HEK293 (cell line): ENCODE measurements at regions of chr6 and their contacts with region 1.

Region 1: GRCh38 chr6:125888989-125889656 is 67.4 kb upstream of the HINT3 start:
- H3K4me3 ChIP-seq: no peak overlapping the region
- H3K27ac ChIP-seq: no peak overlapping the region
- H3K4me1 ChIP-seq: 0 out of 2 replicates have a peak, but pooled peaks cover 4% of the 10 kb centered on the region
- CTCF ChIP-seq: no peak

Region 2: DNA sequence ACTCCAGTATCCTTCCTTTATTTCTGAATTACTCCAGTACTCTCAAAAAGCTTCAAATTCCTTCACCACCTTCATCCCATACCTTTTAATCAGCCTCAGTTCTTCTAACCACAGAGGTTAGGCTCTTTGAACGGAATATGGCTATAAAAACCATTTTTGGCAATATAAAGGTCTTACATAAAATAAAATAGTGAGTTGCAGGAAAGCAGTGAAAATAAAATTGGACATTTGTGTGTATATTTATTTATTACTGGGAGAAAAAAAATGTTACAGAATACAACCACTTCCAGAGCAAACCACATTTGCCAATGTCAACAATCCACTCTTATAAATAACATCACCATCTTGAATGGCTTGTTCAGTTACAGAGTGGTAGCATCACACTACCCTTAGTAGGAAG is 595.1 kb before region 1 on chr6:
- CTCF ChIA-PET with region 1: no interaction called
- POLR2A ChIA-PET with region 1: no interaction called
- H3K4me3 ChIP-seq: no peak overlapping the region
- H3K27ac ChIP-seq: no peak overlapping the region
- H3K4me1 ChIP-seq: no peaks in the 10 kb centered on the region
- CTCF ChIP-seq: no peak

Region 3: GRCh38 chr6:125899726-125900182 is 10.6 kb after region 1 on chr6:
- CTCF ChIA-PET with region 1: interaction called, 49 read pairs
- POLR2A ChIA-PET with region 1: no interaction called
- H3K4me3 ChIP-seq: no peak overlapping the region
- H3K27ac ChIP-seq: no peak overlapping the region
- H3K4me1 ChIP-seq: no peaks in the 10 kb centered on the region
- CTCF ChIP-seq: no peak